H1 (cell line): ENCODE measurements at regions of chr10 and their contacts with region 1.

Region 1: GRCh38 chr10:13470270-13470669 is 58.5 kb downstream of the BEND7 start:
- DNase-seq: no peak
- H3K4me3 ChIP-seq: no peak overlapping the region
- H3K27ac ChIP-seq: no peak overlapping the region
- H3K4me1 ChIP-seq: no peaks in the 10 kb centered on the region
- H3K27me3 ChIP-seq: no peaks in the 10 kb centered on the region
- CTCF ChIP-seq: peak in 2 of 3 experiments; percentile 22 to 53; a peak in 2 of 4 replicates
- EP300 ChIP-seq: no peak
- POLR2A ChIP-seq: no peak
- RAD21 ChIP-seq: peak in 1 of 2 experiments; percentile 14; a peak in 1 of 4 replicates

Region 2: DNA sequence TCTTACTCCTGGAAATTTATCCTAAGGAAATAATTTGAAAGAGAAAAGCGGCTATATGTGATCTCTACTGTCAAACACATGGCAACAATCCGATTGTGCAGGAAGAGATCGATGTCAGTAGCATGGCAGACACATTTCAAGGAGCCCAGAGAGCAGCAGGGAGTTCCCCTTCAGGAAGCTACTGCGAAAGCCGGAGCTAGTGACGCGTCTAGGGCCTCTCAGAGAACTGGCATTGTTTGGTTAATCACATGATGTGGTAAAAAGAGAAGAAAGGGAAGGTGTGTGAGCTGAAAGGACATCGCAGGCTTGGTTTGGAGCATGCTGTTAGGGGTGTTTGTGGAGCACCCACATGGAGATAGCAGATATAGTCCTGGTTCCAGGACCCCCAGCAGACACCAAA is 16.4 kb before region 1 on chr10:
- CTCF ChIA-PET with region 1: interaction called, 10 read pairs
- POLR2A ChIA-PET with region 1: interaction called, 4 read pairs
- DNase-seq: peak in 1 of 2 experiments; percentile 41
- H3K4me3 ChIP-seq: no peak overlapping the region
- H3K27ac ChIP-seq: no peak overlapping the region
- H3K4me1 ChIP-seq: no peaks in the 10 kb centered on the region; a peak in 1 of 7 replicates
- H3K27me3 ChIP-seq: 0 out of 7 replicates have a peak, but pooled peaks cover 0 to 2% (median 0%) of the 10 kb centered on the region in 4 experiments
- CTCF ChIP-seq: no peak
- EP300 ChIP-seq: no peak
- POLR2A ChIP-seq: no peak
- RAD21 ChIP-seq: no peak

Region 3: GRCh38 chr10:13485623-13486022 is 15.4 kb after region 1 on chr10:
- CTCF ChIA-PET with region 1: interaction called, 37 read pairs
- POLR2A ChIA-PET with region 1: no interaction called
- DNase-seq: no peak
- H3K4me3 ChIP-seq: no peak overlapping the region
- H3K27ac ChIP-seq: no peak overlapping the region
- H3K4me1 ChIP-seq: peaks cover 0 to 6% (median 2%) of the 10 kb centered on the region in 4 experiments; a peak in 3 of 7 replicates
- H3K27me3 ChIP-seq: peaks cover 0 to 1% (median 0%) of the 10 kb centered on the region in 4 experiments; a peak in 1 of 7 replicates
- CTCF ChIP-seq: no peak
- EP300 ChIP-seq: no peak
- POLR2A ChIP-seq: no peak
- RAD21 ChIP-seq: no peak